Sciatic nerve (tissue), 2 donors: ENCODE measurements at regions of chr9 and their contacts with region 1.

Region 1: GRCh38 chr9:79201636-79202035 is 370.1 kb upstream of the TLE4 start:
- DNase-seq: no peak
- ATAC-seq: no peak

Region 2: GRCh38 chr9:79233542-79233941 is 31.9 kb after region 1 on chr9:
- intact Hi-C with region 1: loop called (anchors 1 kb)
- DNase-seq: no peak
- ATAC-seq: no peak